Dorsolateral prefrontal cortex (tissue), 120 donors: ENCODE measurements at regions of chrX and their contacts with region 1.

Region 1: DNA sequence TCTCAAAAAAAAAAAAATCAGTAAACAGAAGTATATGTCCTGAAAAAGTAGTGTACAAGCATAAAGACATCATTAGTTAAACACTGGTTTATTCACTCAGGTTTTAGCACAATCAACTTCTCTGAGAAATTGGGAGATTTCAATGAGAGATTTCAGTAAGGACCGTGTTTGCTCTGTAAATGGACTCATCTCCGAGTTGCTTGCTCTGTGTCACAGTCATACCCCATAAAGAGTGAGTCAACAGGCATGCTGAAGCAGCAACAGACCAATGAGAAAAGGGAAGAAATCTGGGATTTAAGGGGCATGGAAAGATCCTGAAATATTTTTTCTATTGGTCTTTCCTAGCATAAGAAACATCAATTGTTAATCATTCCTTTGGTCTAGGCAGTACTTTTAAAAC is 4.7 kb downstream of the GLUD2 start:
- DNase-seq: no peak
- H3K4me3 ChIP-seq: no peak overlapping the region
- H3K27ac ChIP-seq: no peak overlapping the region
- H3K27me3 ChIP-seq: peaks cover 0 to 45% (median 3%) of the 10 kb centered on the region in 45 donors
- CTCF ChIP-seq: no peak

Region 2: GRCh38 chrX:121160987-121161386 is 108.9 kb after region 1 on chrX:
- intact Hi-C with region 1: loop called in 1 of 2 experiments (anchors 10 kb)
- DNase-seq: no peak
- H3K4me3 ChIP-seq: no peak overlapping the region
- H3K27ac ChIP-seq: peak overlapping the region in 3 of 59 donors; percentile 2 to 14 (median 13)
- H3K27me3 ChIP-seq: peaks cover 0 to 43% (median 7%) of the 10 kb centered on the region in 45 donors
- CTCF ChIP-seq: no peak